Left colon (tissue), 2 donors: ENCODE measurements at regions of chr12 and their contacts with region 1.

Region 1: DNA sequence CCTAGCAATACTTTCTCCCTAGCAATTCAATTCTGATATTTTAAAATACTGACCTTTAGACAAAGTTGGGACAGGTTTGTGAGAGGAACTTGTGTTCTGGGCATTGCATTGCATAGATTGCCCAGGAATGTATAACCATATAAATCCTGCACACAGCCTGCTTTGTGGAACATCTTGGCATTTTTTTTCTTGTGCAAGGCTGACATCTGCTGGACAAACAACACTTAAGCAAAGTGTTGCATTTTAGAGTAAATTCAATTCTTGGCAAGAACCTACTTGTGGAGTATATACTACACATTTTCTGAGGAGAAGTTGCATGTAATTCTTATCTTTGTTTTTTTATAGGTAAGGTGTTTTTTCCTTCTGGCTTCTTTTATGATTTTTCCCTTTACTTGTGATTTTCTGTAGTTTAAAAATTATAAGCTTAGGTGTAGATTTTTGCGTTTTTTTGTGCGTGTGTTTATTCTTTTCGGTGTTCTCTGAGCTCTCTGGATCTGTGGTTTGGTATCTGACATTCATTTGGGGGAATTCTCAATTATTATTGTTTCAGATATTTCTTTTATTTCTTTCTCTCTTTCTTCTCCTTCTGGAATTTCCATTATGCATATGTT is 26.4 kb downstream of the TESPA1 start:
- DNase-seq: peak in 1 of 2 donors; percentile 10
- ATAC-seq: peak; percentile 72

Region 2: GRCh38 chr12:54749191-54749818 is 208.8 kb before region 1 on chr12:
- intact Hi-C with region 1: loop called in 1 of 2 experiments (anchors 5 kb)
- DNase-seq: no peak
- ATAC-seq: peak; percentile 34

Region 3: DNA sequence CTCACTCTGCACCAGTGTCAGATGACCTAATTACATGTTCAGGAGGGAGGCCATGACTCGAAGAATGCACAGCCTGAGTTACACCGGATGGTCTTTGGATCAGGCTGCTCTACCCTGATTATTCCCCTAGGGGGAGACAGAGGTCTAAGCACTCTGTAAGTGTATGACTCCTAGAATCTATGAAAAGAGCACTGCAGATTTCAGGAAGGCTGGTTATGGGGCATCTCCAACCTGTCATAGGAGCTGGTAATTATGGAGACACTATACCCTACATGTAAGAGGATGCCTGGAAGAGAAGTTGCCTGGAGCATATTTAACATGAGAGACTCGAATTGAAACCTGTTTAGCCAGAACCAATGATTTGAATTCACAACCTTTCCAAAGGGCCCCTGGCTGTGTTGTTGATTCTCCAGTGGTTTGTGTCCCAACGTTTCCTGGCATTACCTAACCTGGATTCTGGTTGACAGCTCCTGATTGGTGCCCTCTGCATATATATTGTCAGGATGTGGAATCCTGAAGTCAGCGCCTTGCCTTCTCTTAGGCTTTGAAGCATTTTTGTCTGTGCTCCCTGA is 104.1 kb before region 1 on chr12 and contains the start of gene MUCL1:
- intact Hi-C with region 1: loop called in 1 of 2 experiments (anchors 10 kb)
- DNase-seq: peak in 1 of 2 donors; percentile 49
- ATAC-seq: peak; percentile 88
- total RNA-seq, gene MUCL1: not detected